Activated naive CD4-positive, alpha-beta T cell treated with anti-CD3 and anti-CD28 coated beads for 36 hours (primary cell): ENCODE measurements at regions of chr4 and their contacts with region 1.

Region 1: DNA sequence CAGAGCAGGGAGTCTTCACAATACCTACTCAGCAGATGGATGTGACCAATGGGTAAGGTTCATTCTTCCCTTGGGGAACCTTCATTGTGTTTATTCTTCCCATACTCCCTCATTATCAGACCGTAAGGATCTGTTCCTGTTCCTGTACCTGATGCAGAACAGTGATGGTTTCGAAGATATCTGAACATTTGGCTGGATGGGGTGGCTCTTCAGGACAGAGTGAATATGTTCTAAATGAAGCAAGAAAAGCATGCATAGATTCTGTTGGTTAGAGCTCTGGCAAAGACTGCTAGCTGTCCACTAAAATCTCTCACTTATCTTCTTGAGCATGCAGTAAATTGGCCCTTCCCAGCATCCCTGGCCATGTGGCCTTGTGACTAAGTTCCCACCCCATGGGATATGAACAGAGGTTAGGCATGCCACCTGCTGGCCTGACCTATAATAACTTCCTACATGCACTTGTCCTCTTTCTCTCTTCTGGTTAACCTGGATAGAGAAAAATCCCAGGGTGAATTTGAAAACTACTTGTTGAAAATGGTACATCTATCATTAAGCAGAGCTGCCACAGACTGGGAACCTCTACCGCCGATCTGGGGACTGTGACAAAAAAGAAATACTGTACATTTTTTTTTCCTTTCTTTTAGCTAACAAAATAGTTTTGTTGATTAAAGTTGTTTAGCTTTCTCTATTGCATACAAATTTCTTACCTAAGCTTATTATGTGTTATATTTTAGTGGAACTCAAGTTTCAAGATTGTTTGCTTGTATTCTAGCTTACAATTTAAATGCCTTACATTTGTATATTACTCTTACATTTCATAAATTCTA is 60.0 kb upstream of the BANK1 start:
- DNase-seq: peak; percentile 76
- H3K4me3 Mint-ChIP-seq: no peak overlapping the region
- H3K27ac Mint-ChIP-seq: no peak overlapping the region
- H3K4me1 Mint-ChIP-seq: no peaks in the 10 kb centered on the region
- H3K27me3 Mint-ChIP-seq: no peaks in the 10 kb centered on the region

Region 2: GRCh38 chr4:100421361-100421978 is 1309.0 kb before region 1 on chr4:
- CTCF ChIA-PET with region 1: no interaction called
- intact Hi-C with region 1: loop called (anchors 1 kb)
- DNase-seq: no peak
- H3K4me3 Mint-ChIP-seq: no peak overlapping the region
- H3K27ac Mint-ChIP-seq: no peak overlapping the region
- H3K4me1 Mint-ChIP-seq: peaks cover 2% of the 10 kb centered on the region
- H3K27me3 Mint-ChIP-seq: no peaks in the 10 kb centered on the region

Region 3: DNA sequence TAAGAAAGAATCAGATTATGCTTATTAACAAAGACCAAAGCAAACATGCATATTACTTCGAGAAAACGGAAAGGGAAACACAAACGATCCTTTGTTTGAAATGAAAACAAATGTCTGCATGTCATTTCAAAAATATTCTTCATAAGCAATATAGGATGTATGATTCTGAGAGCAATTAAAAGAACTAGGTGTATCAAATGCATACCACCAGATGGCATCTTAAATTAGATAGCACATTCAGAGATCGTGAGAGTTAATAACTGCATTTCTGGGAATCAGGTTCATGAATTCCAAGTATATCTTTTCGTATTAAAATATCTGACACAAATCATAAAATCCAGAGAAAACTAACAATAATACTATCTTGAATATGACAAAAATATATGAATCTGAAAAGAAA is 542.7 kb before region 1 on chr4:
- CTCF ChIA-PET with region 1: no interaction called
- intact Hi-C with region 1: loop called (anchors 1 kb)
- DNase-seq: no peak
- H3K4me3 Mint-ChIP-seq: no peak overlapping the region
- H3K27ac Mint-ChIP-seq: no peak overlapping the region
- H3K4me1 Mint-ChIP-seq: peaks cover 6% of the 10 kb centered on the region
- H3K27me3 Mint-ChIP-seq: no peaks in the 10 kb centered on the region

Region 4: GRCh38 chr4:102263011-102263787 is 532.7 kb after region 1 on chr4:
- CTCF ChIA-PET with region 1: no interaction called
- intact Hi-C with region 1: loop called (anchors 5 kb)
- DNase-seq: peak; percentile 22
- H3K4me3 Mint-ChIP-seq: no peak overlapping the region
- H3K27ac Mint-ChIP-seq: no peak overlapping the region
- H3K4me1 Mint-ChIP-seq: peaks cover 3% of the 10 kb centered on the region
- H3K27me3 Mint-ChIP-seq: no peaks in the 10 kb centered on the region

Region 5: GRCh38 chr4:102299354-102300107 is 569.0 kb after region 1 on chr4:
- CTCF ChIA-PET with region 1: no interaction called
- intact Hi-C with region 1: loop called (anchors 1 kb)
- DNase-seq: peak; percentile 26
- H3K4me3 Mint-ChIP-seq: no peak overlapping the region
- H3K27ac Mint-ChIP-seq: no peak overlapping the region
- H3K4me1 Mint-ChIP-seq: no peaks in the 10 kb centered on the region
- H3K27me3 Mint-ChIP-seq: no peaks in the 10 kb centered on the region